ENCODE measurements at regions of chr15 and their contacts with region 1.

Region 1: GRCh38 chr15:84929744-84930371 is 45.4 kb downstream of the SLC28A1 start:
- DNase-seq: peak; percentile 63 to 90
- ATAC-seq: peak; percentile 88

Region 2: GRCh38 chr15:84588053-84588874 is 341.6 kb before region 1 on chr15:
- intact Hi-C with region 1: loop called in 1 of 2 experiments (anchors 10 kb)
- DNase-seq: peak; percentile 86 to 90
- ATAC-seq: peak; percentile 99

Region 3: DNA sequence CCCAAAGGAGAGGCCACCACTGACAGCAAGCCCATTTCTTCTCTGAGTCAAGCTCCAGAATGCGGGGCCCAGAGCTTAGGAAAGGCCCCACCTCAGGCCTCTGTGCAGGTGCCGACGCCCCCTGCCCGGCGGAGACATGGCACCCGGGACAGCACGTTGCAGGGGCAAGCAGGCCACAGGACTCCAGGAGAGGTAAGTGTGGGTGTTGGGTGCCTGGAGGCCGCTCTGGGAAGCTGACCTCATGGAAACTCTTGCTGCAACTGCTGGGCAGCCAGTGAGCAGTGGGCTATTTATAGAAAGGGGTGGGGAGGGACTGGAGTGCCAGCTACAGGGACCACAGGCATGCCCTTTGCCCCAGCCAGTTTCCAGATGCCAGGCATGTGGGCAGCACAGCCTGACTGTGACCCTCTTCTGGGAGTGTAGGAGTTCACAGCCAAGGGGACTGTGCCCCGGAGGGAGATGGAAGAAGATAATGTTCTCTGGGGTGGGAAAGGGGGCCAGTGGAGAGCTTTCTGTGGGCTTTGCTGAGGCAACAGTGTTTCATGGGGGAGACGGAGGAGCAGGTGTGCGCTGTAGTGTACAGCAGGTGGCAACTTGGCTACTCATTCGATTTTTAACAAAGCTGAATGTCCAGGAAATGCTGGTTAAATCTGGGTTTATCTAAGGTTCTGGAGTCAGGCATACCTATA is 89.0 kb before region 1 on chr15:
- intact Hi-C with region 1: loop called in 1 of 2 experiments (anchors 10 kb)
- DNase-seq: peak; percentile 55 to 81
- ATAC-seq: peak; percentile 91

Measured in left colon (tissue), 2 donors.